Posterior cingulate gyrus (tissue), 11 donors: ENCODE measurements at regions of chr13 and their contacts with region 1.

Region 1: GRCh38 chr13:20703780-20704445 is 414 bp downstream of the IL17D start:
- DNase-seq: peak; percentile 53 to 96 (median 67)

Region 2: GRCh38 chr13:20525690-20526544 is 178.0 kb before region 1 on chr13 and contains the start of gene CRYL1:
- intact Hi-C with region 1: loop called (anchors 5 kb)
- DNase-seq: peak; percentile 73 to 97 (median 85)

Region 3: GRCh38 chr13:20773194-20774080 is 69.5 kb after region 1 on chr13 and contains the start of gene EEF1AKMT1:
- intact Hi-C with region 1: loop called (anchors 5 kb)
- DNase-seq: peak; percentile 80 to 98 (median 88)